ENCODE measurements at regions of chr19 and their contacts with region 1.

Region 1: GRCh38 chr19:19643158-19644053 is at the start of gene GMIP:
- DNase-seq: peak; percentile 92
- ATAC-seq: peak; percentile 82
- H3K4me3 Mint-ChIP-seq: peak within 1 kb of the TSS; percentile 100
- H3K27ac Mint-ChIP-seq: peak within 1 kb of the TSS; percentile 96
- H3K4me1 Mint-ChIP-seq: peaks cover 10% of the 10 kb centered on the region
- H3K27me3 Mint-ChIP-seq: no peaks in the 10 kb centered on the region
- total RNA-seq, gene GMIP: 54.9 to 56.6 TPM

Region 2: GRCh38 chr19:19053508-19054314 is 589.7 kb before region 1 on chr19:
- CTCF ChIA-PET with region 1: no interaction called
- POLR2A ChIA-PET with region 1: no interaction called
- intact Hi-C with region 1: no loop called
- DNase-seq: peak; percentile 77
- ATAC-seq: peak; percentile 69
- H3K4me3 Mint-ChIP-seq: no peak overlapping the region
- H3K27ac Mint-ChIP-seq: no peak overlapping the region
- H3K4me1 Mint-ChIP-seq: peaks cover 2% of the 10 kb centered on the region
- H3K27me3 Mint-ChIP-seq: no peaks in the 10 kb centered on the region

Region 3: DNA sequence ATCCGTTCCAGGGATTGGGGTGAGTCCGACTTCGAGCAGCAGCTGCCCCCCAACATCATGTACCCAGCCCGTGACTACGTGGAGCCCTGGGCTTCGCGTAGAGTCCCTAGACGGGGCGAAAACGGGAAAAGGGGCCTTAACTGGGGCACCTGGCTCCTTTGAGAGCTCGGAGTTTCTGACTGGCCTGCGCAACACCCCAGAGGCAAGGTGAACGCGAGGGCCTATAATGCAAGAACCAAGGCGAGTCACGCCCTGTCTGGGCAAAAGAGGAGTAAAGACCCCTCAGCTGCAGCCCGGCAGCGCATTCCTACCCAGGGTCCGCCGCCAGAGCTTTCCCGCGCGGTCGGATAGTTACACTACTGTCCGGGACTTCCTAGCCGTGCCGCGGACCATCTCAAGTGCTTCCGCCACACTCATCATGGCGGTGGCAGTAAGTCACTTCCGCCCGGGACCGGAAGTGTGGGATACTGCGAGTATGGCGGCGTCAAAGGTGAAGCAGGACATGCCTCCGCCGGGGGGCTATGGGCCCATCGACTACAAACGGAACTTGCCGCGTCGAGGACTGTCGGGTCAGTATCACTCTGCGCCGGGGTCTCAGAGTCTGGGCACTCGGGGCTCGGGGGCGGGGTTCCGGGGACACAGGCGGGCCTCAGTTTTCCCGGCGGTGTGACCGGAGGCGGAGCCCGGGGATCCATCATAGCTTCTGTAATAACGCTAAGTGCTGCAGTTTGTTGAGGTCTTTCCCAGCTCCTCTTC is 127.5 kb before region 1 on chr19 and contains the start of gene NDUFA13:
- CTCF ChIA-PET with region 1: no interaction called
- POLR2A ChIA-PET with region 1: no interaction called
- intact Hi-C with region 1: loop called in 1 of 2 experiments (anchors 1 kb)
- DNase-seq: peak; percentile 95
- ATAC-seq: peak; percentile 94
- H3K4me3 Mint-ChIP-seq: peak within 1 kb of the TSS; percentile 83
- H3K27ac Mint-ChIP-seq: peak within 1 kb of the TSS; percentile 92
- H3K4me1 Mint-ChIP-seq: peaks cover 25% of the 10 kb centered on the region
- H3K27me3 Mint-ChIP-seq: no peaks in the 10 kb centered on the region
- total RNA-seq, gene NDUFA13: 310 to 323 TPM

Region 4: DNA sequence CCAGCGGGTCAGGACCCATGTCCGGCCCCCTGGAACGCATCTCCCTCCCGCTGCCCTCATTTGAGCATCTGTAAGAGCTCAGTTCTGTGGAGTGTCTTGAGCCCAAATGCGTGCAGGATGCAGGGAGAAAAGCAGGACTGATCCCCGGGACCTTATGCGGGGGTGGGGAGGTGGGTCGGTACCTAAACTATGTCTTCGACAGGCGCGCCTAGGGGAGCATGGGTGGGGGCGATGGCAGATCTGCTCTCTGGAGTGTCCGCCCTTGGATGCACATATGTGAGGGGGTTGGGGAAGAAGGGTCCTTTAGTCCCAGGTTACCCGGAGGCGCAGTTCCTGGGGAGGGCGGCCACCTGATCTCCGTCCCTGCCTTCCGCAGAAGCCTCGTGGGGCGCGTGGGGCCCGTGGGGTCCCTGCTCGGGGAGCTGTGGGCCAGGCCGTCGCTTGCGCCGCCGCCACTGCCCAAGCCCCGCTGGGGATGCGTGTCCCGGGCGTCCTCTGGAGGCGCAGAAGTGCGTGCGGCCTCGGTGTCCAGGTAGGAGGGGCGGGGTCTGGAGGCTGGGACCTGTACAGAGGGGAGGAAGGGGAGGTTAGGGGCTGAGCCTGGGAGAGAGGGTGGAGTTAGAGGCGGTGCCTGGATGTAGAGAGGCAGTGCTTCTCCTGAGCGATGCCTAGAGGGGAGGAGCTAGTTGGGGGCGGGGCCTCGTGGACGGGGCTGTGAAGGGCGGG is 102.5 kb before region 1 on chr19:
- CTCF ChIA-PET with region 1: interaction called, 4 read pairs
- POLR2A ChIA-PET with region 1: interaction called, 3 read pairs
- intact Hi-C with region 1: loop called in 1 of 2 experiments (anchors 1 kb)
- DNase-seq: peak; percentile 93
- ATAC-seq: peak; percentile 94
- H3K4me3 Mint-ChIP-seq: peak overlapping the region; percentile 54
- H3K27ac Mint-ChIP-seq: no peak overlapping the region
- H3K4me1 Mint-ChIP-seq: peaks cover 29% of the 10 kb centered on the region
- H3K27me3 Mint-ChIP-seq: peaks cover 11% of the 10 kb centered on the region

Region 5: GRCh38 chr19:19591133-19591825 is 52.1 kb before region 1 on chr19:
- CTCF ChIA-PET with region 1: interaction called, 6 read pairs
- POLR2A ChIA-PET with region 1: no interaction called
- intact Hi-C with region 1: loop called in 1 of 2 experiments (anchors 2 kb)
- DNase-seq: peak; percentile 85
- ATAC-seq: peak; percentile 91
- H3K4me3 Mint-ChIP-seq: peak overlapping the region; percentile 27
- H3K27ac Mint-ChIP-seq: peak overlapping the region; percentile 82
- H3K4me1 Mint-ChIP-seq: peaks cover 66% of the 10 kb centered on the region
- H3K27me3 Mint-ChIP-seq: no peaks in the 10 kb centered on the region

Region 6: GRCh38 chr19:19618219-19619051 is 25.0 kb before region 1 on chr19 and contains the start of gene PBX4:
- CTCF ChIA-PET with region 1: interaction called, 3 read pairs
- POLR2A ChIA-PET with region 1: no interaction called
- intact Hi-C with region 1: loop called (anchors 1 kb)
- DNase-seq: peak; percentile 99
- ATAC-seq: peak; percentile 93
- H3K4me3 Mint-ChIP-seq: peak within 1 kb of the TSS; percentile 91
- H3K27ac Mint-ChIP-seq: peak within 1 kb of the TSS; percentile 90
- H3K4me1 Mint-ChIP-seq: peaks cover 46% of the 10 kb centered on the region
- H3K27me3 Mint-ChIP-seq: no peaks in the 10 kb centered on the region
- total RNA-seq, gene PBX4: 19.4 to 21.2 TPM

Measured in activated CD4-positive, alpha-beta T cell treated with anti-CD3 and anti-CD28 coated beads for 36 hours (primary cell).